Body of pancreas (tissue), 4 donors: ENCODE measurements at regions of chr1 and their contacts with region 1.

Region 1: DNA sequence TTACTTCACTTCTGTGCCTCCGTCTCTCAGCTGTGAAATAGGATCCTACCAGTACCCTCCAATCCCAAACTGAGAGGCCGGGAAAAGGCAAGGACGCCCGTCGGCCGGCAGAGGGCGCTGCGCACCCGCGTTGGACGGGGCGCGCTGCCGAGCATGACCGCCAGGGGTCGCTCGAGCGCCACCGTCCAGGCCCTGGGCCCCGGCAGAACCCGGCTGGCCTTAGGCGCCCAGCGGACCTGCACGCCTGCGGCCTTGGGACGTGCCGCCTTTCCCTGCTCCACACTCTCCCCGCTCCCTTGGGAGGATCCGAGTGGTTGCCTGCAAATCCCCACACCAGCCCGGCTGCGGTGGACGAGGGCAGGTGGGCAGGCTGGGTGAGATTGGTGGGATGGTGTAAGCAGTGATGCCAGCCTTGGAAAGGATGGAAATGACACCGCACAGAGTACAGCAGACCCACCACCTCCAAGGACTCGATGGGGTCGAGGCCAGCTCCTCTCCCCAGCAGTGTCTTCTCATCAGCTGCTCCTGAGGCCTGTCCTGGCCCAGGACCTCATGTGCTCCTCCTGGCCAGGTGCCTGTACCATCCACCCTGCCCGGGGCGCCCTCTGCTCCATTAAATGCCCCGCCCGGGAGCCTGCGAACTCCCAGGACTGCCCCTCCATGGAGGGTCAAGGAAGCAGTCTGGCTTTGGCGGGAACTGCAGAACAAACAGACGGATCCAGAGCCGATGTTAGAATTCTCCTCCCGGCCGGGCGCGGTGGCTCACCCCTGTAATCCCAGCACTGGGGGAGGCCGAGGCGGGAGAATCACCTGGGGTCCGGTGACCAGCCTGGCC is 47.4 kb upstream of the LBR start:
- DNase-seq: peak; percentile 66 to 73 (median 68)
- ATAC-seq: peak; percentile 93
- H3K4me3 ChIP-seq: no peak overlapping the region
- H3K27ac ChIP-seq: no peak overlapping the region
- H3K4me1 ChIP-seq: peaks cover 9% of the 10 kb centered on the region
- H3K27me3 ChIP-seq: no peaks in the 10 kb centered on the region
- CTCF ChIP-seq: peak; percentile 100
- POLR2A ChIP-seq: no peak

Region 2: GRCh38 chr1:225354906-225355305 is 120.3 kb before region 1 on chr1:
- intact Hi-C with region 1: no loop called
- DNase-seq: no peak
- ATAC-seq: no peak
- H3K4me3 ChIP-seq: no peak overlapping the region
- H3K27ac ChIP-seq: no peak overlapping the region
- H3K4me1 ChIP-seq: no peaks in the 10 kb centered on the region
- H3K27me3 ChIP-seq: no peaks in the 10 kb centered on the region
- CTCF ChIP-seq: no peak
- POLR2A ChIP-seq: no peak

Region 3: GRCh38 chr1:225845571-225846259 is 370.5 kb after region 1 on chr1:
- intact Hi-C with region 1: no loop called
- DNase-seq: peak; percentile 79 to 87 (median 83)
- ATAC-seq: peak; percentile 61
- H3K4me3 ChIP-seq: no peak overlapping the region
- H3K27ac ChIP-seq: peak overlapping the region in 3 of 4 donors; percentile 46 to 64 (median 49)
- H3K4me1 ChIP-seq: peaks cover 35% of the 10 kb centered on the region
- H3K27me3 ChIP-seq: no peaks in the 10 kb centered on the region
- CTCF ChIP-seq: peak; percentile 42 to 78 (median 61)
- POLR2A ChIP-seq: peak in 2 of 3 donors; percentile 16 to 23

Region 4: GRCh38 chr1:225973158-225973557 is 498.0 kb after region 1 on chr1:
- intact Hi-C with region 1: loop called (anchors 5 kb)
- DNase-seq: no peak
- ATAC-seq: no peak
- H3K4me3 ChIP-seq: no peak overlapping the region
- H3K27ac ChIP-seq: no peak overlapping the region
- H3K4me1 ChIP-seq: peaks cover 10% of the 10 kb centered on the region
- H3K27me3 ChIP-seq: no peaks in the 10 kb centered on the region
- CTCF ChIP-seq: no peak
- POLR2A ChIP-seq: no peak